ENCODE measurements at regions of chr9 and their contacts with region 1.

Region 1: DNA sequence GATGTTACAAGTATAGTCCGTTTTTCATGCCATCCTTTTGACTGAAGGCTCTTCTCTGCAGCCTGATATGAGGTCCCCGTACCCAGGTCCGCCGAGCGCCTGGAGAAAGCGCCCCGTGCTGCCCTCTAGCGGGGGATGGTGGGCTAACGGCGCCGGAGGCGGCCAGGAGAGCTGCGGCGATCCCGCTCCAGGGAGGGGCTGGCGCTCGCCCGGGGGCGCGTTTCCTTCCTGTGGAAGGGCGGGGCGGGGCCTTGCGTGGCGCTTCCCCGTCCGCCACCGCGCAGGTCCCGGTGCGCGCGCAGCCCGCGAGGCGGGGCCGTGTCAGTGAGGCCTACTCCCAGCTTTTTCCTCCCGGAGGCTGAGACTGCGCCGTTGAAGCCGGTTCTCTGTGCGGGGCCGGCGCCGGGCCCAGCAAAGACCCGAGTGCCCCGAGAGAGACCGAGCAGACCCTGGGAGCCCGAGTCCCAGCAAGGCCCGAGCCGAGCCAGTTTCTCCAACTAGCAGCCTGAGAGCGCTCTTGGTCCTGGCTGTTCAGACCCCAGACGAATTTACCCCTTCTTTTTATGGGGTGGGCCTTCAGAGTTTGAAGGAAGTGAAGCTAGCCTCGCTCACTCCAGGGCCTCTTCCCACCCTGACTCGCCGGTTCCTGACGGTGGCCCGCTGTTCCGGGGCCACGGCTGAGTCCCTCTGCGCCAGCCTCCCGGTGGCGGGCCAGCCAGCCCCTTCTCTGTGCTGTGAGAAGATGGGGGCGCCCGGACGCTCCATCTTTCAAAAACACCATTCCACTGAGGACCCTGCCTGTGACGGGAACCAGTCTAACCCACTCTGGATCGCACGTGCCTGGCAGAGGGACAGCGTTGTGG is 9.7 kb upstream of the PHF2 start:
- DNase-seq: peak; percentile 87
- ATAC-seq: peak; percentile 96
- H3K4me3 ChIP-seq: peak overlapping the region; percentile 59 to 79 (median 73)
- H3K27ac ChIP-seq: peak overlapping the region; percentile 83
- H3K4me1 ChIP-seq: peaks cover 14% of the 10 kb centered on the region
- H3K27me3 ChIP-seq: no peaks in the 10 kb centered on the region; a peak in 1 of 5 replicates
- CTCF ChIP-seq: peak; percentile 94
- EP300 ChIP-seq: no peak
- POLR2A ChIP-seq: peak; percentile 61 to 86
- RAD21 ChIP-seq: peak; percentile 80

Region 2: DNA sequence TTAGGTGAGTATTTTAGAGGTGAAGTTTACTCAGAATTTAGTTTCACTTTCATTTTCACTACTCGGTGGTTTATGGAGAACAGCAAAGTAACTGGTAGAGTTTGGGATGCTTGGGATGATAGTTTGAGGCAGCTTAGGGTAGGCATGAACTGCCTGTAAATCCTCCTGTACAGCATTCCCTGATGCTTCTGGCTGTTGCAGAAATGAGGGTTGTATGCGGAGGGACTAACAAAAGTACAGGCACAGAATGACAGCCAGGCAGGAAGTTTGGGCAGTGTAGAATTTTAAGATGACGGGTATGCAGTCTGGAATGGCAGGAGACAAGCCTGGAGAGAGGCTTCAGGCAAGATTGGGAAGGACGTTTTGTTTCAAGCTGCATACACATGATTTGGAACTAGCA is 65.2 kb before region 1 on chr9:
- CTCF ChIA-PET with region 1: no interaction called
- POLR2A ChIA-PET with region 1: no interaction called
- in situ Hi-C with region 1: no loop called
- intact Hi-C with region 1: no loop called
- DNase-seq: no peak
- ATAC-seq: no peak
- H3K4me3 ChIP-seq: no peak overlapping the region
- H3K27ac ChIP-seq: no peak overlapping the region
- H3K4me1 ChIP-seq: no peaks in the 10 kb centered on the region
- H3K27me3 ChIP-seq: no peaks in the 10 kb centered on the region
- CTCF ChIP-seq: no peak
- EP300 ChIP-seq: no peak
- POLR2A ChIP-seq: no peak
- RAD21 ChIP-seq: no peak

Region 3: DNA sequence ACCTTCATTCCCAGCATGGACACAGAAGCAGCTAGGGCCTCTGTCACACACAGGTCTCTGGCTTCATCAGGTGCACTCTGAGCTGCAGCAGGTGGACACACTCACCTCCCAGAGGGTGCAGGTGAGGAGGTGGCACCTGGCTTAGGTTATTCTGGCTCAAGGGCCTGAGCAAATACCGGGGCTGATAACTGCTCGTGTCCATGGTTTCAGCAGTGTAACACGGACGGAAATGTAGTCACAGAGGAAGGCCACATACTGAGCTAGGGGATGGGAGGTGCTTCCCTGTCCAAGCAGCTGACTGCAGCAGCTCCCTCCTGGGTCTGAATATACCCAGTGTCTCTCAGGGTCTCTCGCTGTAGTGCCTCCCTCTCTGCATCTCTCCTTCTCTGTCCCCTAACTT is 15.5 kb after region 1 on chr9:
- CTCF ChIA-PET with region 1: interaction called, 3 read pairs
- POLR2A ChIA-PET with region 1: interaction called, 26 read pairs
- in situ Hi-C with region 1: no loop called
- intact Hi-C with region 1: no loop called
- DNase-seq: peak; percentile 47
- ATAC-seq: peak; percentile 44
- H3K4me3 ChIP-seq: peak overlapping the region in 1 of 3 experiments; percentile 65; a peak in 1 of 6 replicates
- H3K27ac ChIP-seq: peak overlapping the region; percentile 28
- H3K4me1 ChIP-seq: peaks cover 67% of the 10 kb centered on the region
- H3K27me3 ChIP-seq: no peaks in the 10 kb centered on the region
- CTCF ChIP-seq: no peak
- EP300 ChIP-seq: no peak
- POLR2A ChIP-seq: no peak
- RAD21 ChIP-seq: no peak

Measured in HepG2 (cell line).